ENCODE measurements at regions of chr3 and their contacts with region 1.

Region 1: DNA sequence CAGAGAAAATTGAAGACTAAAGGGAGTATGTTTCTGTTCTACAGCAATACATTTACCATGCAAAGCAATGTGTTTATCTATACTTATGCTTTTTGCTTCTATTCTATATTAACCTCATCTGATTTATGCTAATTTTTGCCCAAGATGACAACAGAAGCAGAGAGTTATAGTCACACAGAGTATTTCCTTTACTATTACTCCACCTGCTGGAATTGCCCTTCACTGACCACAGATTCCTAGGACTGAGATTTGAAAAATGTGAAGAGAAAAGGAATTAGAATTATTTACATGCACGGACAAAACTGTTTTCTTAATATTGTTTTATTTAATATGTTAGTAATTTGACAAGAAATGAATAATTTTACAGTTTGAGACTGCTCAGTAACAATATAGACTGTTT is 745.6 kb downstream of the VGLL3 start:
- DNase-seq: peak; percentile 16 to 49
- H3K4me3 ChIP-seq: no peak overlapping the region
- H3K4me1 ChIP-seq: peaks cover 4% of the 10 kb centered on the region
- H3K27me3 ChIP-seq: no peaks in the 10 kb centered on the region

Region 2: GRCh38 chr3:85821130-85821756 is 424.1 kb before region 1 on chr3:
- in situ Hi-C with region 1: loop called (anchors 25 kb)
- DNase-seq: peak; percentile 49 to 71
- H3K4me3 ChIP-seq: no peak overlapping the region
- H3K4me1 ChIP-seq: no peaks in the 10 kb centered on the region
- H3K27me3 ChIP-seq: no peaks in the 10 kb centered on the region

Region 3: DNA sequence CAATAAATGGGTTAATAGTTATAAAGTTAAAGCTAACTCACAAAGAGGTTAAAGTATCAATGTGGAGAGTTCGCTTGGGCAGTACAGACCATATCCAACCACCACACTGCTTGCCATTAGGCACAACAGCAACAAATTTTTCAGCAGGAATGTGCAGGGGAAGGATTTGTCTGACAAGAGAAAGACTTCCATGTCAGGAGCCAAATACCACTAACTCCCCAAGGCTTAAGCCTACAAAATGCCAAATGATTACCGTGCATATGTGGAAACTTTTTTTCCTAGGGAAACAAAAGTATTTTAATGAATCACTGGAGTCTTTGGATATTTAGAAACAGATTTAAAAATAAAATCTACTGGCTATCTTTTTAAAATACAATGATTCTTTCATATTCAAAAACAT is 737.5 kb after region 1 on chr3:
- in situ Hi-C with region 1: no loop called
- DNase-seq: peak; percentile 22 to 26
- H3K4me3 ChIP-seq: no peak overlapping the region
- H3K4me1 ChIP-seq: peaks cover 16% of the 10 kb centered on the region
- H3K27me3 ChIP-seq: no peaks in the 10 kb centered on the region